ENCODE measurements at regions of chr13 and their contacts with region 1.

Region 1: GRCh38 chr13:77779552-77780272 is 82.2 kb downstream of the SLAIN1 start:
- DNase-seq: no peak
- H3K4me3 Mint-ChIP-seq: no peak overlapping the region
- H3K27ac Mint-ChIP-seq: peak overlapping the region; percentile 5
- H3K4me1 Mint-ChIP-seq: peaks cover 10% of the 10 kb centered on the region
- H3K27me3 Mint-ChIP-seq: peaks cover 4% of the 10 kb centered on the region

Region 2: GRCh38 chr13:77465603-77466205 is 314.0 kb before region 1 on chr13:
- intact Hi-C with region 1: no loop called
- DNase-seq: no peak
- H3K4me3 Mint-ChIP-seq: no peak overlapping the region
- H3K27ac Mint-ChIP-seq: no peak overlapping the region
- H3K4me1 Mint-ChIP-seq: no peaks in the 10 kb centered on the region
- H3K27me3 Mint-ChIP-seq: peaks cover 22% of the 10 kb centered on the region

Region 3: GRCh38 chr13:77833331-77833863 is 53.7 kb after region 1 on chr13:
- intact Hi-C with region 1: no loop called
- DNase-seq: no peak
- H3K4me3 Mint-ChIP-seq: no peak overlapping the region
- H3K27ac Mint-ChIP-seq: no peak overlapping the region
- H3K4me1 Mint-ChIP-seq: no peaks in the 10 kb centered on the region
- H3K27me3 Mint-ChIP-seq: peaks cover 5% of the 10 kb centered on the region

Region 4: GRCh38 chr13:78022164-78022877 is 242.6 kb after region 1 on chr13:
- intact Hi-C with region 1: loop called (anchors 10 kb)
- DNase-seq: peak; percentile 32
- H3K4me3 Mint-ChIP-seq: no peak overlapping the region
- H3K27ac Mint-ChIP-seq: no peak overlapping the region
- H3K4me1 Mint-ChIP-seq: peaks cover 10% of the 10 kb centered on the region
- H3K27me3 Mint-ChIP-seq: no peaks in the 10 kb centered on the region

Region 5: DNA sequence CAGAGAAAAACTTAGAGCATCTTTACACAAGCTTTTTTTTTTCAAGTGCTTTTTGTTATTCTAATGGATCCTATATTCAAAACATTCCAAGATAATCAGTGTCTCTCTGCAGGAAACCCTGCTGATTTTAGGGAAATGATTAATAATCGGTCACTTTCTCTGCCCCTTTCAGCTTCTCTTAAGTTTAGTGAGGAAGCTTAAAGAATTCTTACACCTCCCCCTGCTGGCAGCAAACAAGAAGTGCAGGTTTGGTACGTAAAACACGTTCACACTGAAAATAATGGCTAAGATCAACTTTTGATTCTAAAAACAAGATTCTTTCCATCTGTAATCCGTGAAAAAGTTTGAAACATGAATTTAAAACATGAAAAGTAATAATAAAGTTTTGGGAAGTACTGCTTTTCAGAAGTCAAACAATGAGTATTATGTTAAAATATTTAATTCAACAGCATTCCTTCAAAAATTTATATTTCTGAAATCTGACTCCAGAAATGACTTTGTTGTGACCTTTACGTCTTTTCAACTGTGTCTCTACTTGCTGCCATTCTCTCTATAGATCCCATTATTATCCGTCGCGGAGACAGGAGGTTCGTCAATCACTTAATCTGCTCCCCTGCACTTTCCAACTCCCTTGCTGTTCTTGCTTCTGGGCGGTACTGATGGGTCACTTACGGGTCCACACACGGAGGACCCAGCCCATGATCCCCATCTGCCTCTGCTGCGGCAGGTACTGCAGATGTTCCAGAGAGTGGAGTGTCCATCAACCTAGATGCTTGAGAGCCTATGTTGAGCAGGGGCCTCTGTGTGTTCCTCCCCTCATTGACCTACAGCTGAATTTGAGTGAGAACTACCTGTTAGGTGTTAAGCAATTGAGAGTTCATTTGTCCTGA is 342.0 kb after region 1 on chr13:
- intact Hi-C with region 1: loop called (anchors 1 kb)
- DNase-seq: no peak
- H3K4me3 Mint-ChIP-seq: no peak overlapping the region
- H3K27ac Mint-ChIP-seq: no peak overlapping the region
- H3K4me1 Mint-ChIP-seq: no peaks in the 10 kb centered on the region
- H3K27me3 Mint-ChIP-seq: no peaks in the 10 kb centered on the region

Region 6: DNA sequence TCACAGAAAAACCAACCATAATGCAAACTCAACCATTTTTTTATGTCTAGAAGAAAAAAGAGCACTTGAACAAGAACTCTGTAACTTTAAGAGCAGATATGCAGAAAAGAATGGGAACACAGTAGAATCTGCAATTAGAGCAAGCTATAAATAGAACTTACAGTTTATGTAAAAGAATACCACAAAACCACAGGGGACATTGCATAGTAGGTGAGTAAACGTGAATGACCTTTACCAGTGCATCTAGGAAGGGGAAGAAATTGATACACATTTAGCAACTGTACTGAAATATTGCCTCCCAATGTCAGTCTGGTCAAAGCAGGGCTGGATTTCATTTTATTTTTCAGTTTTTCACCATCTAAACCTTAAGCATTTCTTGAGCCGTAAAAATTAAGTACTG is 381.1 kb after region 1 on chr13:
- intact Hi-C with region 1: no loop called
- DNase-seq: no peak
- H3K4me3 Mint-ChIP-seq: no peak overlapping the region
- H3K27ac Mint-ChIP-seq: no peak overlapping the region
- H3K4me1 Mint-ChIP-seq: peaks cover 2% of the 10 kb centered on the region
- H3K27me3 Mint-ChIP-seq: no peaks in the 10 kb centered on the region

Measured in activated T-helper 2 cell treated with anti-CD3 and anti-CD28 coated beads, Interferon-gamma antibody, Interleukin-2, Interleukin-4, amounts not matched to agents 10 μg/mL and 5 μg/mL and 100 μg/mL, durations not matched to agents 14 hours and 24 hours and 36 hours (primary cell).